Mammary epithelial cell (primary cell): ENCODE measurements at regions of chr18 and their contacts with region 1.

Region 1: DNA sequence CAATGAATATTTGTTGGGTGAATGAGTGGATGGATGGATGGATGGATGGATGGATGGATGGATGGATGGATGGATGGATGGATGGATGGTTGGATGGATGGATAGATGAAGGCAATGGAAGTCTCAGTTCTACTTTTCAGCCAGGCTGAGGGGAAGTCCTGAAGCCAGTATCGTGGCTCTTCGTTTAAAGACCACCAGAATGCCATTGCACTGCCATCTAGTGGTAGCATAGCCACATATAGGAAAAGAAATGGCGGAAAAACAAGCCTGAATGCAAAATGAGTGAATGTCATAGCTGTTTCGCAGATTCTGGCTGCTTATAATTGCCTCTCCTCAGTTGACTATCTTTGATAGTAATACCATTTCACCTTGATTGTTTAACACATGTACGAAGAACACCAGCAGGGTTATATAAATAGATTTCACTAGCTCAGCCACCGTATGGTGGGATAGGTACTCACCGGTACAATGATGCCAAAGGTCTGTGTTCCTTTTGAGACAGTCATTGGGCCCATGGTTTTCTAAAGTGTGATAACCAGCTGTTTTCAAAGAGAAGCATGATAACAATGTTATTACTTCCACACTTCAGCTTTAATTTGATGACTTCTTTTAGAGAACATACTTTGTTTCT is 62.3 kb upstream of the GREB1L start:
- DNase-seq: peak; percentile 42
- H3K4me3 ChIP-seq: no peak overlapping the region
- H3K27ac ChIP-seq: no peak overlapping the region
- H3K4me1 ChIP-seq: peaks cover 3% of the 10 kb centered on the region
- H3K27me3 ChIP-seq: no peaks in the 10 kb centered on the region
- CTCF ChIP-seq: peak; percentile 79 to 82

Region 2: DNA sequence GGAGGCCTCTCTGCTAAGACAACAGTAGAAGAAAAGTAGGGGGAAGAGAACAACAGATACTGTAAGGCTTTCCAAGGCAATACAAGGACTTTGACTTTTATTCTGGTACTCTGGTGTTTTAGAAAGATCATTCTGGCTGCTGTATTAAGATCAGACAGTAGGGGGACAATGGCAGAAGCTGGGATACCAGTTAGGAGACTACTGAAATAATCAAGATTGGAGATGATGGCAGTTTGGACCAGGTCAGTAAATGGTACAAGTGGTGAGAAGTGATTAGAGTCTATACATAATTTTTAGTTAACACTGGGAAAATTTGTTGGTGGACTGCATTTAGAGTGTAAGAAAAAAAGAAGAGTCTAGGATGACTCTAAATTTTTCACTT is 207.8 kb before region 1 on chr18:
- CTCF ChIA-PET with region 1: interaction called, 5 read pairs
- dilution Hi-C with region 1: no loop called
- in situ Hi-C with region 1: no loop called
- intact Hi-C with region 1: loop called (anchors 2 kb)
- DNase-seq: peak; percentile 17
- H3K4me3 ChIP-seq: no peak overlapping the region
- H3K27ac ChIP-seq: no peak overlapping the region
- H3K4me1 ChIP-seq: no peaks in the 10 kb centered on the region
- H3K27me3 ChIP-seq: no peaks in the 10 kb centered on the region
- CTCF ChIP-seq: peak; percentile 57 to 60

Region 3: DNA sequence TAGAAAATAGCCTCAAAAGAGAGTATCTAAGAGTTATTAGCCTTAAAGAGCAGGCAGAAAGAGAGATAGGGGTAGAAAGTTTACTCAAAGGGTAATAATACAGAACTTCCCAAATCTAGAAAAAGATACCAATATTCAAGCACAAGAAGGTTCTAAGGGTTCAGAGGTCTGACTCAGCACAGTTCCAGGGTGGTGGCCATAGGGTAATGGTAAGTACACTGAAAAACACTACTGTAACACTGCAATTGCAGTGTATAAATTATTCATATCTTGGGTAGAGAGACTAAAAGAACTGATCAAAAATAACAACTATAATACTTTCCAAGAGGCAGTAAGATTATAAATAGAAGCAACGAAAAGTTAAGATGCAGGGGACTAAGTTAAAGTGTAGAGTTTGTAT is 183.3 kb before region 1 on chr18:
- CTCF ChIA-PET with region 1: no interaction called
- dilution Hi-C with region 1: loop called (anchors 10 kb)
- in situ Hi-C with region 1: no loop called
- intact Hi-C with region 1: loop called (anchors 5 kb)
- DNase-seq: no peak
- H3K4me3 ChIP-seq: no peak overlapping the region
- H3K27ac ChIP-seq: no peak overlapping the region
- H3K4me1 ChIP-seq: peaks cover 8% of the 10 kb centered on the region
- H3K27me3 ChIP-seq: no peaks in the 10 kb centered on the region
- CTCF ChIP-seq: no peak

Region 4: GRCh38 chr18:21004726-21005125 is 175.0 kb before region 1 on chr18:
- CTCF ChIA-PET with region 1: no interaction called
- dilution Hi-C with region 1: loop called (anchors 10 kb)
- in situ Hi-C with region 1: no loop called
- intact Hi-C with region 1: loop called (anchors 5 kb)
- DNase-seq: peak; percentile 14
- H3K4me3 ChIP-seq: no peak overlapping the region
- H3K27ac ChIP-seq: no peak overlapping the region
- H3K4me1 ChIP-seq: peaks cover 4% of the 10 kb centered on the region
- H3K27me3 ChIP-seq: no peaks in the 10 kb centered on the region
- CTCF ChIP-seq: no peak

Region 5: GRCh38 chr18:21111341-21112139 is 68.2 kb before region 1 on chr18 and contains the start of gene ROCK1:
- CTCF ChIA-PET with region 1: no interaction called
- dilution Hi-C with region 1: loop called (anchors 5 kb)
- in situ Hi-C with region 1: no loop called
- intact Hi-C with region 1: loop called (anchors 2 kb)
- DNase-seq: peak; percentile 94
- H3K4me3 ChIP-seq: peak within 1 kb of the TSS; percentile 96 to 100 (median 99)
- H3K27ac ChIP-seq: peak within 1 kb of the TSS; percentile 73
- H3K4me1 ChIP-seq: peaks cover 16% of the 10 kb centered on the region
- H3K27me3 ChIP-seq: no peaks in the 10 kb centered on the region
- CTCF ChIP-seq: no peak
- total RNA-seq, gene ROCK1: 31.8 to 55.9 TPM

Region 6: GRCh38 chr18:21117409-21118131 is 62.1 kb before region 1 on chr18:
- CTCF ChIA-PET with region 1: no interaction called
- dilution Hi-C with region 1: loop called (anchors 5 kb)
- in situ Hi-C with region 1: no loop called
- intact Hi-C with region 1: loop called (anchors 2 kb)
- DNase-seq: no peak
- H3K4me3 ChIP-seq: no peak overlapping the region
- H3K27ac ChIP-seq: no peak overlapping the region
- H3K4me1 ChIP-seq: peaks cover 3% of the 10 kb centered on the region
- H3K27me3 ChIP-seq: no peaks in the 10 kb centered on the region
- CTCF ChIP-seq: no peak

Region 7: DNA sequence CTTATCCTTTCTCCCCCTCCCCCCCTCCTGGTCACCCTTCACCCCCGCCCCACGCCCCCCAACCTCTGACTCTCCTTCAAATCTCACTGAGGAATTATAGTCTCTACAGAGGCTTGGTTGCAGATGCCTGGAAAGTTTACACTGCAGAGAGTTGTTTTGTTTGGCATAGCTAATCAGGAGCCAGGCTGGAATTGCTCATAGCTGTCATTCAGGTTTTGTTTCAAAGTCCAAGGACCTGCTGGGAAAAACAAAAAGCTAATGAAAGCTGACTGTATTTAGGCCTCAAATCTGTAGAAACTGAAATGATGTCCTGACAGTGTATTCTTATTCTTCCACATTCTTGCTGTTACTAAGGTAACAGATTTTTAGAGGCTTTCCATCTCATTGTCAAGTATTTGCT is 84.9 kb after region 1 on chr18:
- CTCF ChIA-PET with region 1: no interaction called
- dilution Hi-C with region 1: loop called (anchors 5 kb)
- in situ Hi-C with region 1: no loop called
- intact Hi-C with region 1: no loop called
- DNase-seq: peak; percentile 55
- H3K4me3 ChIP-seq: no peak overlapping the region
- H3K27ac ChIP-seq: no peak overlapping the region
- H3K4me1 ChIP-seq: no peaks in the 10 kb centered on the region
- H3K27me3 ChIP-seq: no peaks in the 10 kb centered on the region
- CTCF ChIP-seq: no peak

Region 8: GRCh38 chr18:21369146-21369545 is 189.4 kb after region 1 on chr18:
- CTCF ChIA-PET with region 1: no interaction called
- dilution Hi-C with region 1: no loop called
- in situ Hi-C with region 1: no loop called
- intact Hi-C with region 1: no loop called
- DNase-seq: no peak
- H3K4me3 ChIP-seq: no peak overlapping the region
- H3K27ac ChIP-seq: no peak overlapping the region
- H3K4me1 ChIP-seq: no peaks in the 10 kb centered on the region
- H3K27me3 ChIP-seq: peaks cover 2% of the 10 kb centered on the region
- CTCF ChIP-seq: no peak